Activated B cell treated with CpG ODN at 0.5 μM for 24 hours (primary cell): ENCODE measurements at regions of chr3 and their contacts with region 1.

Region 1: GRCh38 chr3:130905551-130905950 is 11.7 kb downstream of the ATP2C1 start:
- DNase-seq: no peak
- ATAC-seq: no peak
- H3K4me3 Mint-ChIP-seq: no peak overlapping the region
- H3K27ac Mint-ChIP-seq: no peak overlapping the region
- H3K4me1 Mint-ChIP-seq: peaks cover 59% of the 10 kb centered on the region
- H3K27me3 Mint-ChIP-seq: no peaks in the 10 kb centered on the region
- CTCF ChIP-seq: no peak

Region 2: DNA sequence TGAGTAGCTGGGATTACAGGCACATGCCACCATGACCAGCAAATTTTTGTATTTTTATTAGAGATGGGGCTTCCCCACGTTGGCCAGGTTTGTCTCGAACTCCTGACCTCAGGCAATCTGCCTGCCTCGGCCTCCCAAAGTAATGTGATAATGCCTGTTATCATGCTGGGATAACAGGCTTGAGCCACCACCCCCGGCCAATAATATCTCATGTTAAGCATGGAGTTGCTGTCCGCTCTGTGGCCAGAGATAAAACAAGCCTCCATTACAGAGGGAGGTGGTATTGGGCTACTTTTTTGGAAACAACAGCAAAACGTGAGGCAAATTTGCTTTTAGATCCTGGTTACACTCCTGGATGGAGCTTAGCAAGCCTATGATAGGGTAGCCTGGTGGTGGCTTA is 856.8 kb before region 1 on chr3:
- CTCF ChIA-PET with region 1: no interaction called
- POLR2A ChIA-PET with region 1: no interaction called
- intact Hi-C with region 1: no loop called
- DNase-seq: no peak
- ATAC-seq: no peak
- H3K4me3 Mint-ChIP-seq: no peak overlapping the region
- H3K27ac Mint-ChIP-seq: no peak overlapping the region
- H3K4me1 Mint-ChIP-seq: peaks cover 6% of the 10 kb centered on the region
- H3K27me3 Mint-ChIP-seq: no peaks in the 10 kb centered on the region
- CTCF ChIP-seq: no peak

Region 3: GRCh38 chr3:130609166-130609979 is 296.2 kb before region 1 on chr3:
- CTCF ChIA-PET with region 1: no interaction called
- POLR2A ChIA-PET with region 1: no interaction called
- intact Hi-C with region 1: no loop called
- DNase-seq: no peak
- ATAC-seq: no peak
- H3K4me3 Mint-ChIP-seq: no peak overlapping the region
- H3K27ac Mint-ChIP-seq: no peak overlapping the region
- H3K4me1 Mint-ChIP-seq: no peaks in the 10 kb centered on the region
- H3K27me3 Mint-ChIP-seq: no peaks in the 10 kb centered on the region
- CTCF ChIP-seq: no peak

Region 4: GRCh38 chr3:130850044-130850797 is 55.3 kb before region 1 on chr3:
- CTCF ChIA-PET with region 1: no interaction called
- POLR2A ChIA-PET with region 1: no interaction called
- intact Hi-C with region 1: loop called (anchors 2 kb)
- DNase-seq: no peak
- ATAC-seq: peak; percentile 80
- H3K4me3 Mint-ChIP-seq: peak overlapping the region; percentile 39
- H3K27ac Mint-ChIP-seq: peak overlapping the region; percentile 65
- H3K4me1 Mint-ChIP-seq: peaks cover 13% of the 10 kb centered on the region
- H3K27me3 Mint-ChIP-seq: peaks cover 3% of the 10 kb centered on the region
- CTCF ChIP-seq: no peak

Region 5: GRCh38 chr3:130925628-130926027 is 20.1 kb after region 1 on chr3:
- CTCF ChIA-PET with region 1: no interaction called
- POLR2A ChIA-PET with region 1: no interaction called
- intact Hi-C with region 1: loop called (anchors 2 kb)
- DNase-seq: peak; percentile 49
- ATAC-seq: peak; percentile 89
- H3K4me3 Mint-ChIP-seq: peak overlapping the region; percentile 41
- H3K27ac Mint-ChIP-seq: peak overlapping the region; percentile 65
- H3K4me1 Mint-ChIP-seq: peaks cover 55% of the 10 kb centered on the region
- H3K27me3 Mint-ChIP-seq: no peaks in the 10 kb centered on the region
- CTCF ChIP-seq: no peak